ENCODE measurements at regions of chr3 and their contacts with region 1.

Region 1: GRCh38 chr3:111577794-111578685 is 17.1 kb downstream of the ZBED2 start:
- DNase-seq: no peak
- ATAC-seq: peak; percentile 77
- H3K4me3 ChIP-seq: no peak overlapping the region
- H3K27ac ChIP-seq: no peak overlapping the region
- H3K4me1 ChIP-seq: no peaks in the 10 kb centered on the region
- H3K27me3 ChIP-seq: no peaks in the 10 kb centered on the region
- CTCF ChIP-seq: peak; percentile 30; the same call in 1 of the 2 replicates

Region 2: DNA sequence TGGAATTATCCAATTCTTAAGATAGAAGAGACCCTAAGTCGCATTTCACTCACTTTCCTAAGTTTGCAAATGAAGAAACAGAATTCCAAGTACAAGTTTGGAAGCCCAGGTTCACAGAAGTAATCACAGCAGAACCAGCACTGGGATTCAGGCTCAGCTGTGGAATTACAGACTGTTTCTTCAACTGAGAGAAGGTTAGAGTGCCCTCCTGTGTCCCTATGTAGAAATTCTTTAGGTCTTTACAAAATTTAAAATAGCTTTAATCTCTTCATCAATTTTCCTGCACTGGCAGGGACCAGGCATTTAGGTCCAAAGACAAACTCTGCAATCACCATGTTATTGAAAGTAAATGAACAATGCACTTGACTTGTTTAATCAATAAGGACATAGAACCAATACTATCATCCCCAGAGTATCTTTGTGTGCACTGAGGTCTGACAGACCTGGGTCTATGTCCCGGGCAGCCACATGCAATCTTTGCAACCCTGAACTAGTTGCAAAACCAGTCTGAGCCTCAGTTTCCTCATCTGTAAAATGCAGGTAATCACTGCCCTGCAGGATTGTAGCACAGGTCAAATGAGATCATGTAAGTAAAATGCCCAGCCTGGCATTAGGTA is 113.4 kb after region 1 on chr3:
- CTCF ChIA-PET with region 1: interaction called, 5 read pairs
- POLR2A ChIA-PET with region 1: no interaction called
- in situ Hi-C with region 1: no loop called
- intact Hi-C with region 1: loop called (anchors 10 kb)
- DNase-seq: no peak
- ATAC-seq: peak; percentile 86
- H3K4me3 ChIP-seq: no peak overlapping the region
- H3K27ac ChIP-seq: no peak overlapping the region
- H3K4me1 ChIP-seq: no peaks in the 10 kb centered on the region
- H3K27me3 ChIP-seq: peaks cover 4% of the 10 kb centered on the region; the same call in 1 of the 2 replicates
- CTCF ChIP-seq: peak; percentile 73